Breast epithelium (tissue), 4 donors: ENCODE measurements at regions of chrX and their contacts with region 1.

Region 1: DNA sequence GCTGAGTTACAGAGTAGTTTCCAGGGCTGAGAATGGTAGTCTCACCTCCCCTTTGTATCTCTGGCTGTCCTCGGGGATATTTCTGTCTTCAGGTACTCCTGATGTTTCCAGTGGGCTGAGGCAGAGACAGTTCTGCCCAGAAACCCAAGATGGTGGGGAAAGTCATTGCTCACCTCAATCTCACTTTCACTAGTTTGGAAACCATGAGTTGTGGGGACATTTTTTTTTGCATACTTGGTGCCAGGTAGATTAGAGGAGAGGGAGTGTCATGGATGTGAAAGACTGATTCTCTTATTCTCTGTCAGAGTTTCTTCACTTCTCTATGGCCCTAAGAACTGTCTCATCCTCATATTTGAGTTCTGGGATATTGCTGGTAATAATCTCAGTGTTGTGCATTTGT is 708.6 kb upstream of the MAGEB2 start:
- DNase-seq: no peak
- H3K4me3 ChIP-seq: no peak overlapping the region
- H3K27ac ChIP-seq: no peak overlapping the region
- H3K4me1 ChIP-seq: no peaks in the 10 kb centered on the region
- H3K27me3 ChIP-seq: no peaks in the 10 kb centered on the region
- CTCF ChIP-seq: no peak
- POLR2A ChIP-seq: no peak

Region 2: GRCh38 chrX:29798469-29798868 is 291.7 kb after region 1 on chrX:
- intact Hi-C with region 1: no loop called
- DNase-seq: no peak
- H3K4me3 ChIP-seq: no peak overlapping the region
- H3K27ac ChIP-seq: no peak overlapping the region
- H3K4me1 ChIP-seq: no peaks in the 10 kb centered on the region
- H3K27me3 ChIP-seq: peaks cover 0 to 10% of the 10 kb centered on the region in 2 donors
- CTCF ChIP-seq: no peak
- POLR2A ChIP-seq: no peak

Region 3: GRCh38 chrX:29858714-29859113 is 352.0 kb after region 1 on chrX:
- intact Hi-C with region 1: loop called (anchors 10 kb)
- DNase-seq: no peak
- H3K4me3 ChIP-seq: no peak overlapping the region
- H3K27ac ChIP-seq: no peak overlapping the region
- H3K4me1 ChIP-seq: no peaks in the 10 kb centered on the region
- H3K27me3 ChIP-seq: peaks cover 0 to 8% of the 10 kb centered on the region in 2 donors
- CTCF ChIP-seq: no peak
- POLR2A ChIP-seq: no peak